ENCODE measurements at regions of chr3 and their contacts with region 1.

Region 1: DNA sequence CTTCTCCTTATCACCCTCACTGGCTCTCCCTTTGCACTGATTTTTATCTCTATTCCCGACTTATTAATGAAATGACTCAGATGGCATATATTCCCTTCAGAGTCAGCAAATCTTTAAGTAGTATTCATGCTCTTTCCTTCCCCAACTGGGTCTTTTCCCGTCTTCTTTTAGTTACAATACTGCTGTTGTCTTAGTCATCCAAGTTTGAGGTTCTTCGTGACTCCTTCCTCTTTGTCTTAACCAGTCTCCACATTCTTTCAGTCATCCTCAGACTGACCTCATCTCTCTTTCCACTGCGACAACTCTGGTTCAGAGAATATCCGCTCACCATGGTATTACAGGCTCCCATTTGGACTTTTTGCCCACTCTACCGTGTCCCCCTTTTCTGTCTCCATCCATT is 12.4 kb downstream of the WDR5B start:
- H3K4me3 ChIP-seq: no peak overlapping the region
- H3K27ac ChIP-seq: no peak overlapping the region
- H3K4me1 ChIP-seq: no peaks in the 10 kb centered on the region
- CTCF ChIP-seq: no peak

Region 2: DNA sequence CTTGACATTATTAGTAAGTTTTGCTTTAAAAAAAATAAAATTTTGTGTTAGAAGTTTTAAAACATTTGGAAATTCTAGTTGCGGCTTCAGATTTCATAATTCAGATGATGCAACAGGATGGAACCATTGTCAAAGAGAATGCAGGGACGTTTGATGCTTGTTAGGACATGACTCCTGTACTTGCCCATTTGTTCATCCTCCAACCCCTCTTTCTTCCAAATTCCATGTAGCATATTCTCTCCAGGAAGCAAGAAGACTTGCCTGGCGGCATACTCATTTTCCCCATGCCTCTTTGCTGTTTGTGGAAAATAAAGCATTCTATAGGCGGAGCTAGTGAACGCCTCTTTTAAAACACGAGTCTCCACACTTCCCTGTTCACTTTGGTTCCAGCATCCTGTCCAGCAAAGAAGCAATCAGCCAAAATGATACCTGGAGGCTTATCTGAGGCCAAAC is 78.6 kb before region 1 on chr3 and contains the start of gene CSTA:
- CTCF ChIA-PET with region 1: no interaction called
- POLR2A ChIA-PET with region 1: no interaction called
- H3K4me3 ChIP-seq: no peak within 1 kb of the TSS
- H3K27ac ChIP-seq: no peak within 1 kb of the TSS
- H3K4me1 ChIP-seq: no peaks in the 10 kb centered on the region
- CTCF ChIP-seq: no peak

Region 3: GRCh38 chr3:122392868-122393844 is 10.3 kb before region 1 on chr3:
- CTCF ChIA-PET with region 1: interaction called, 12 read pairs
- POLR2A ChIA-PET with region 1: no interaction called
- H3K4me3 ChIP-seq: no peak overlapping the region
- H3K27ac ChIP-seq: no peak overlapping the region
- H3K4me1 ChIP-seq: no peaks in the 10 kb centered on the region
- CTCF ChIP-seq: peak; percentile 24; the same call in 1 of the 2 replicates

Region 4: DNA sequence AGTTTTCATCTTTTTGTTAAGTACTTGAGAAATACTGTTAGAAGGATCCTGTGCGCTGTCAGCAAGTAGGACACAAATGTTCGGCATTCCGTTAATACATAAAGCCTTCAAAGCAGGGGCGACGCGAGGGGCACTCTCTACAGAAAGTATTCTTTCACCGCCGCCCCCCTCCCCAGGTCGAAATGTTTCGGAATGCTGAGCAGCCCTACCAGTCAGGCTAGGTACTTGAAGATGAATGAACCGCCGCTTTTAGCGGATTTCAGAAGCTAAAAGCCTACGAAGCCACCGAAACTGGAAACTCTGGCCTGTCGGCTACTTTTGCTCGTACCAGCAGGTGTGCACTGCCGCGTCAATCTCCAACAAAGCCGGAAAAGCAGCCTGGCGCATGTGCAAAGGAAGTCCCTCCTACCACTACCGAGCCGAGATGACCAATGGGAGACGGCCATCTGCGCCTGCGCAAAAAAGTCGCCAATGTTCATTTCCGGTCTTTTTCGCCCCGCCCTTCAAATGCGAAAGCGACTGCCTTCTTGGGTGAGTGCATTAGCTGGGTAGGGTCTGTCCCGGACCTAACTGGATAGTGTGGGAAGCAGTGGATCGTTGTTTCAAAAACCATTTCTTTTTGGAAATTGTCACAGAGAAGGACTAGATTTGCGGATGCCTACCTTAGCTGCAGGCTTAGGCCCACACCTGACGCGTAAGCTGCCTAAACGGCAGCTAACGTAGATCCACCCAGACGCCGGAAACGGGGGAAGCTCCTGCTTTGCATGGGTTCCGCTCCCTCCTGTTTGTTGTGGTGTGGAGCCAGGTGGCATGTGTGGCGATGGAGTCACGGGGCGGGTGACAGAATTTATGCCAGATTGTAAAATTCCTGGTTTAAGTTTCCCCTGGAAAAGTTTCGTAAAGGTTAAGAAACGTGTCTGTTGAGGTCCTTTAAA is 12.5 kb after region 1 on chr3 and contains the start of gene WDR5B:
- CTCF ChIA-PET with region 1: no interaction called
- POLR2A ChIA-PET with region 1: no interaction called
- H3K4me3 ChIP-seq: peak within 1 kb of the TSS; percentile 79
- H3K27ac ChIP-seq: peak within 1 kb of the TSS; percentile 76
- H3K4me1 ChIP-seq: no peaks in the 10 kb centered on the region
- CTCF ChIP-seq: 0 out of 2 replicates have a peak, but pooled peaks have one; percentile 12

Measured in HEK293 (cell line).